ENCODE measurements at regions of chr2 and their contacts with region 1.

Region 1: GRCh38 chr2:99397251-99397920 is 60.2 kb downstream of the EIF5B start:
- DNase-seq: no peak
- H3K4me3 ChIP-seq: no peak overlapping the region
- H3K27ac ChIP-seq: no peak overlapping the region
- H3K4me1 ChIP-seq: no peaks in the 10 kb centered on the region
- H3K27me3 ChIP-seq: no peaks in the 10 kb centered on the region
- CTCF ChIP-seq: no peak

Region 2: GRCh38 chr2:99365661-99366060 is 31.7 kb before region 1 on chr2:
- CTCF ChIA-PET with region 1: no interaction called
- dilution Hi-C with region 1: no loop called
- in situ Hi-C with region 1: no loop called
- intact Hi-C with region 1: loop called (anchors 2 kb)
- DNase-seq: no peak
- H3K4me3 ChIP-seq: no peak overlapping the region
- H3K27ac ChIP-seq: no peak overlapping the region
- H3K4me1 ChIP-seq: no peaks in the 10 kb centered on the region
- H3K27me3 ChIP-seq: no peaks in the 10 kb centered on the region
- CTCF ChIP-seq: no peak